Adrenal gland (tissue), 19 donors: ENCODE measurements at regions of chr11 and their contacts with region 1.

Region 1: DNA sequence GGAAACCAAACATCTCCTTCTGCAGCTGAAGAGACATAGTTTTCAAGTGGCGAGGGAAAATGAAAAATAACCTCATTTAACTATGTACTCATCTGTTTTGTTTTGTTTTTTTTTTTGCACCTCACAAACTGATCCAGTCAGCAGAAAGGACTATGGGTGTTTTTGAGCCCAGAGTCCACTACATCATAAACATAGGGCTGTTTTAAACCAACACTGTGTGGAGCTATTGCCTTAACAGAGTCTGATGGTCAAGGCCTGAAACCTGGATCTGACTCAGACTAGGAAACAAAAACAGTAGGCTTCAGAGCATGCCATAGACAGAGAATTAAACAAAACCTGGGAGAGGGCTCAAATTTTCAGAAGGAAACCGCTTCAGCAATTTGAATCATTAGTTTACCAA is 99.3 kb upstream of the FSHB start:
- DNase-seq: peak in 3 of 7 donors; percentile 16 to 29 (median 22)
- H3K4me3 ChIP-seq: no peak overlapping the region
- H3K27ac ChIP-seq: no peak overlapping the region
- H3K4me1 ChIP-seq: no peaks in the 10 kb centered on the region
- H3K27me3 ChIP-seq: no peaks in the 10 kb centered on the region
- CTCF ChIP-seq: peak in 4 of 6 experiments; percentile 12 to 48 (median 34)
- POLR2A ChIP-seq: no peak

Region 2: GRCh38 chr11:29432719-29433325 is 698.7 kb before region 1 on chr11:
- intact Hi-C with region 1: loop called in 1 of 2 experiments (anchors 10 kb)
- DNase-seq: no peak
- H3K4me3 ChIP-seq: no peak overlapping the region
- H3K27ac ChIP-seq: no peak overlapping the region
- H3K4me1 ChIP-seq: no peaks in the 10 kb centered on the region
- H3K27me3 ChIP-seq: no peaks in the 10 kb centered on the region
- CTCF ChIP-seq: peak; percentile 47 to 67 (median 62)
- POLR2A ChIP-seq: no peak

Region 3: GRCh38 chr11:30282289-30282631 is 150.7 kb after region 1 on chr11:
- intact Hi-C with region 1: no loop called
- DNase-seq: no peak
- H3K4me3 ChIP-seq: no peak overlapping the region
- H3K27ac ChIP-seq: no peak overlapping the region
- H3K4me1 ChIP-seq: no peaks in the 10 kb centered on the region
- H3K27me3 ChIP-seq: no peaks in the 10 kb centered on the region
- CTCF ChIP-seq: no peak
- POLR2A ChIP-seq: no peak

Region 4: GRCh38 chr11:30314625-30315024 is 183.1 kb after region 1 on chr11:
- intact Hi-C with region 1: loop called (anchors 10 kb)
- DNase-seq: no peak
- H3K4me3 ChIP-seq: no peak overlapping the region
- H3K27ac ChIP-seq: no peak overlapping the region
- H3K4me1 ChIP-seq: no peaks in the 10 kb centered on the region
- H3K27me3 ChIP-seq: no peaks in the 10 kb centered on the region
- CTCF ChIP-seq: peak; percentile 18 to 54 (median 46)
- POLR2A ChIP-seq: no peak